ENCODE measurements at regions of chr3 and their contacts with region 1.

Region 1: GRCh38 chr3:124014366-124014942 is 22.5 kb upstream of the ROPN1 start:
- DNase-seq: no peak
- H3K4me3 ChIP-seq: no peak overlapping the region
- H3K4me3 Mint-ChIP-seq: no peak overlapping the region
- H3K27ac Mint-ChIP-seq: no peak overlapping the region
- H3K4me1 ChIP-seq: no peaks in the 10 kb centered on the region
- H3K4me1 Mint-ChIP-seq: peaks cover 6% of the 10 kb centered on the region
- H3K27me3 ChIP-seq: no peaks in the 10 kb centered on the region
- H3K27me3 Mint-ChIP-seq: peaks cover 19% of the 10 kb centered on the region
- CTCF ChIP-seq: no peak

Region 2: DNA sequence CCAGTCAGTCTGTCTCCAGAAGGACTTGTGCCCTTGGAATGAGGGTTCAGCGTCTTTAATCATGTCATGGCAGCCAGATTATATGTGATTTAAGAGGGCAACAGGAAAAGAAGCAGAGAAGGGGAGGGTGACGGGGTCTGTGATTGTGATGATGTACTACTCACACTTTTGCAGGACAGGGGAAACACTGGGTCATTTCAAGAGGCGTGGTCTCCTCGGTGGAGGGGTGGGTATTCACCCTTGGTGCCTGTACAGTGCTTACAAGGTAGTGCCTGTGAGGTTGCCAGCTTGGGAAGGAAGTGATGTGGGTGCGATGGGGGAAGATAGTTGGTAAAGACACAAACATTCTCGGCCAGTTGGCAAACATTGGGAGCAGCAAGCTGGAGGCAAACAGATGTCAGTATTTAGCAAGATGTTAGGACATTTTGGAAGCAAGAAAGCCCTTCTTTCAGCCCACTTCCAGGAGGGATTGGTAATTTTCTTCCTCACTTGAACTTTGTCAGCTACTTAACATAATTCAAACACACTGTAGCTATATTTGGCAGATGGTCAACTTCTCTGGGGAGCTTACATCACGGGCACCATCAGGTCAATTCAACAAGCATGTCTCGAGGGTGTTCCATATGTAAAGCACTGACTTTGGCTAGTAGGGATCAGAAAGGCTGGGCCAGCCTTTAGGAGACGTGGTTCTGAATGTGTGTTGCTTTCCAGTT is 48.9 kb after region 1 on chr3:
- CTCF ChIA-PET with region 1: no interaction called
- POLR2A ChIA-PET with region 1: no interaction called
- intact Hi-C with region 1: no loop called
- DNase-seq: no peak
- H3K4me3 ChIP-seq: no peak overlapping the region
- H3K4me3 Mint-ChIP-seq: no peak overlapping the region
- H3K27ac Mint-ChIP-seq: no peak overlapping the region
- H3K4me1 ChIP-seq: no peaks in the 10 kb centered on the region
- H3K4me1 Mint-ChIP-seq: no peaks in the 10 kb centered on the region
- H3K27me3 ChIP-seq: peaks cover 1% of the 10 kb centered on the region; the same call in 1 of the 2 replicates
- H3K27me3 Mint-ChIP-seq: peaks cover 7% of the 10 kb centered on the region
- CTCF ChIP-seq: no peak

Region 3: DNA sequence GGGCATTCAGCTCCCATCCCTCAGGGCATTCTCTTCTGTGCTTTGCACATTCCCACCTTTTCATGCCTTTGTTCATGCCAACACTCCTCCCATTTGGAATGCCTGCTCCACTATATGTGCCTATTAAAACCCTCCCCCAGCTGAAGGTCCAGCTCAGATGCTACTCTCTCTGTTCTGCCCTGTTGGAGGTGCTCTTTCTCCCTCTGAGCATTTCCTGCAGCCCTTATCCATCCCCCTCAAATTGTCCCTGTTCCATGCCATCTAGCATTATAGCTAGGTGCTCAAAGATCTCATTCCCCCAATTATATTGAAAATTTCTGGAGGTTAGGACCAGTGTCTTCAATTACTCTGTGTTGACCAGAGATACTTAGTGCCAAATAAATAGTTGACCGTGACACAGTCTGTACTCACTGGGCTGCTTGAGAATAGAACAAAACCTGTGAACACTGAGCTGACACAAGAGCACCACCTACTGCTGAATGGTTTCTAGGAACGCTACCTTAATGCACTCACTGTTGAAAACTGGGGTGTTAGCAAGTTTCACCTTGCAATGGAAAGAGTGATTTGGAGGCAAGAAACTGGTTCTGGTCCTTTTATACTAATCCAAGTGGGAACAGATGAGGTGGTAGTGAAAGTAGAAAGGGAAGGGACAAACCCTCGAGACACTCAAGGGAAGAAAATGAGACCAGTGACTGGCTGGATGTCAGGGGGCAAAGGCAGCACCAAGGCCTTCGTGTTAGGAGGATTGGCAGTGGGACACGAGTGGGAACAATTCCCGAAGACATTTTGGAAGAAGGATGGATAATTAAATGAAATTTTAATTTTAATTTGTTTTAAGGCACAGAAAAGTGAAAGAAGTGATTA is 267.2 kb after region 1 on chr3:
- CTCF ChIA-PET with region 1: interaction called, 4 read pairs
- POLR2A ChIA-PET with region 1: no interaction called
- intact Hi-C with region 1: loop called (anchors 1 kb)
- DNase-seq: peak in 1 of 2 experiments; percentile 18
- H3K4me3 ChIP-seq: no peak overlapping the region
- H3K4me3 Mint-ChIP-seq: no peak overlapping the region
- H3K27ac Mint-ChIP-seq: no peak overlapping the region
- H3K4me1 ChIP-seq: no peaks in the 10 kb centered on the region
- H3K4me1 Mint-ChIP-seq: no peaks in the 10 kb centered on the region
- H3K27me3 ChIP-seq: no peaks in the 10 kb centered on the region
- H3K27me3 Mint-ChIP-seq: peaks cover 14% of the 10 kb centered on the region
- CTCF ChIP-seq: peak; percentile 34 to 40

Region 4: DNA sequence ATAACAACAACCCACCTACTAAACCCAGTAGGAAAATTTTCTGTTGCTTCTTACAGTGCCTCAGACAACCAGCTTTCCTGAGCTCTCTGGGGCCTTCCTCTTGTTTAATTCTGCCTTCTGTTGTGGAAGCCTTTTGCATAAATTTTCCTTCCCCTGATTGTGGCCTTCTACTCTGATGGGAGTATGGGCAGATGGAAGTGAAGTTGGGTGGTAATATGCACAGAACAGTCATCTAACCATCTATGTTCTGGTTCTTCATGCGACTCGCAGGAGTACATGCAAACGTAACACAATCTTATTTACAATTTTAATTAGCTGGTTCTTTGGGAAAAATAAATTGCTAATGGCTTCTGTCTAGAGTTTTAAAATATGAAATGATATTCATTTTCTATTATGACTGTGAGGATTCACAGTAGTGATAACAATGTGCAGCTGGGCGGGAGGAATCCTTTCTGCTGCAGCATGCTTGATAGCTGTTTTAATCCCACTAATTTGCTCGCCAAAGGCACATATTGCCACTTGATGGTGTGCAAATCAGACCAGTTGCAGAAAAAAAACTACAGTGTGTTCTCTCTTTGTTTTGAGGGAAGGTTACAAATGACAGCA is 289.0 kb after region 1 on chr3:
- CTCF ChIA-PET with region 1: no interaction called
- POLR2A ChIA-PET with region 1: no interaction called
- intact Hi-C with region 1: no loop called
- DNase-seq: no peak
- H3K4me3 ChIP-seq: no peak overlapping the region
- H3K4me3 Mint-ChIP-seq: no peak overlapping the region
- H3K27ac Mint-ChIP-seq: no peak overlapping the region
- H3K4me1 ChIP-seq: no peaks in the 10 kb centered on the region
- H3K4me1 Mint-ChIP-seq: no peaks in the 10 kb centered on the region
- H3K27me3 ChIP-seq: no peaks in the 10 kb centered on the region; the same call in 1 of the 2 replicates
- H3K27me3 Mint-ChIP-seq: peaks cover 11% of the 10 kb centered on the region
- CTCF ChIP-seq: no peak

Region 5: GRCh38 chr3:124467980-124468902 is 453.8 kb after region 1 on chr3:
- CTCF ChIA-PET with region 1: no interaction called
- POLR2A ChIA-PET with region 1: no interaction called
- intact Hi-C with region 1: loop called (anchors 1 kb)
- DNase-seq: peak; percentile 55 to 76
- H3K4me3 ChIP-seq: no peak overlapping the region
- H3K4me3 Mint-ChIP-seq: no peak overlapping the region
- H3K27ac Mint-ChIP-seq: no peak overlapping the region
- H3K4me1 ChIP-seq: peaks cover 7% of the 10 kb centered on the region; the same call in 1 of the 2 replicates
- H3K4me1 Mint-ChIP-seq: peaks cover 7% of the 10 kb centered on the region
- H3K27me3 ChIP-seq: no peaks in the 10 kb centered on the region
- H3K27me3 Mint-ChIP-seq: peaks cover 4% of the 10 kb centered on the region
- CTCF ChIP-seq: peak; percentile 97 to 98

Measured in Caco-2 (cell line).